Activated T-helper 2 cell treated with anti-CD3 and anti-CD28 coated beads, Interferon-gamma antibody, Interleukin-2, Interleukin-4, amounts not matched to agents 10 μg/mL and 5 μg/mL and 100 μg/mL, durations not matched to agents 14 hours and 24 hours and 36 hours (primary cell): ENCODE measurements at regions of chr4 and their contacts with region 1.

Region 1: DNA sequence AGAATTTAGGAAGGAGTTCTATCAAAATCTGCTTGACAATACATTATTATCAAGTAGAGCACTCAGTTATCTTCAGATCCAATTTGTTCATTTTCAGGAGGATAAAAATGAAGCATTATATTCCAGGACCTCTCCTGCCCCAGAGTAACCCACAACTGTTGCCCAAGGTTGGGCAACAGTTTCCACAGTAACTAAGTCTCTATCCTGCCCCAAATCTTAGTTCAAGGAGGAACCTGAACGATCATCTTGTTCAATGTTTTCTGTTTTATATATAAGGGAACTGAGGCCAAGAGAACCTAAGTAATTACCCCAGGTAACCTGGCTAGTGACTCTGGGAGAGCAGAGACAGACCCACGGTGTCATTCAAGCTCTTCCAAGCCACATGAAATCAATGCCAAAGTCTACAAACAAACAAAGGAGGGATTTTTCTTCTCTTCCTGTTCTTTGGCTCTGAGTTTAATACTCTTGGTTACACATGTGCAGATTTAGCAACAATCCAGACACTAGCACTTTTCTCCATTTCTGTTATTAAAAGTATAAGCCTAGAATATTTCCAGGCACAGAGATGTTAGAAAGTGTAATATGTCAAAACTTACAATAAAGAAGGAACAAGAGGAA is 105.6 kb downstream of the C4orf51 start:
- DNase-seq: no peak
- H3K4me3 Mint-ChIP-seq: no peak overlapping the region
- H3K27ac Mint-ChIP-seq: peak overlapping the region; percentile 95
- H3K4me1 Mint-ChIP-seq: peaks cover 42% of the 10 kb centered on the region
- H3K27me3 Mint-ChIP-seq: no peaks in the 10 kb centered on the region

Region 2: GRCh38 chr4:145829629-145830395 is 44.3 kb after region 1 on chr4:
- intact Hi-C with region 1: loop called (anchors 1 kb)
- DNase-seq: peak; percentile 13
- H3K4me3 Mint-ChIP-seq: peak overlapping the region; percentile 62
- H3K27ac Mint-ChIP-seq: peak overlapping the region; percentile 84
- H3K4me1 Mint-ChIP-seq: peaks cover 46% of the 10 kb centered on the region
- H3K27me3 Mint-ChIP-seq: no peaks in the 10 kb centered on the region